B cell (primary cell): ENCODE measurements at regions of chr5 and their contacts with region 1.

Region 1: GRCh38 chr5:74648835-74649293 is 8.3 kb upstream of the ENC1 start:
- DNase-seq: peak; percentile 72
- ATAC-seq: peak; percentile 63
- H3K4me3 ChIP-seq: no peak overlapping the region
- H3K4me3 Mint-ChIP-seq: no peak overlapping the region
- H3K27ac ChIP-seq: no peak overlapping the region
- H3K27ac Mint-ChIP-seq: no peak overlapping the region
- H3K4me1 ChIP-seq: no peaks in the 10 kb centered on the region
- H3K4me1 Mint-ChIP-seq: peaks cover 2% of the 10 kb centered on the region
- H3K27me3 ChIP-seq: peaks cover 0 to 10% (median 7%) of the 10 kb centered on the region in 4 experiments
- H3K27me3 Mint-ChIP-seq: peaks cover 26% of the 10 kb centered on the region
- CTCF ChIP-seq: peak; percentile 92

Region 2: DNA sequence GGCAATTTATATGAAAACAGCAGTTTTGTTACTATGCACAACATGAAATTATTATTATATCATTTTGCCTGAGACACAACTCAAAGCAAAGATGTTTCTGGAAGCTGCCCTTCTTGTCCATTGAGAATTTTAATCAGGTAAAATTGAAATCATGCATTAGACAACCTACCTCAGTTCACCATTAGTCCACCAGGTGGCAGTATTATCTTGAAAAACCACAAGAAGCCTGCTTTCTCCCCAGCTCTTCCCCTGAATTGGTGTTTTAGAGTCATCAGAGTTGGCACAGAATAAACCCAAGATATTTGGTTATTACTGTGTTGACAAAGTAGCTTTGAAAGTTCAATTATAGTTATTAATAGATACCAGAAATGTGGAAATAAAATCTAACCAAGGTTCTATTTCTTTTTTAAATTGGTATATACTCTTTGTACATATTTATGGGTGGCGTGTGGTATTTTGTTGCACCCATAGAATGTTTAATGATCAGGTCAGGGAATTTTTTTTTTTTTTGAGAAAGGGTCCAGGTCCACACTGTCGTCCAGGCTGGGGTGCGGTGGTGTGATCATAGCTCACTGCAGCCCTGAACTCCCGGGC is 1057.7 kb before region 1 on chr5:
- CTCF ChIA-PET with region 1: interaction called, 15 read pairs
- POLR2A ChIA-PET with region 1: no interaction called
- intact Hi-C with region 1: loop called (anchors 1 kb)
- DNase-seq: peak; percentile 74
- ATAC-seq: peak; percentile 54
- H3K4me3 ChIP-seq: no peak overlapping the region
- H3K4me3 Mint-ChIP-seq: no peak overlapping the region
- H3K27ac ChIP-seq: no peak overlapping the region
- H3K27ac Mint-ChIP-seq: no peak overlapping the region
- H3K4me1 ChIP-seq: no peaks in the 10 kb centered on the region
- H3K4me1 Mint-ChIP-seq: no peaks in the 10 kb centered on the region
- H3K27me3 ChIP-seq: no peaks in the 10 kb centered on the region
- H3K27me3 Mint-ChIP-seq: no peaks in the 10 kb centered on the region
- CTCF ChIP-seq: peak; percentile 88

Region 3: DNA sequence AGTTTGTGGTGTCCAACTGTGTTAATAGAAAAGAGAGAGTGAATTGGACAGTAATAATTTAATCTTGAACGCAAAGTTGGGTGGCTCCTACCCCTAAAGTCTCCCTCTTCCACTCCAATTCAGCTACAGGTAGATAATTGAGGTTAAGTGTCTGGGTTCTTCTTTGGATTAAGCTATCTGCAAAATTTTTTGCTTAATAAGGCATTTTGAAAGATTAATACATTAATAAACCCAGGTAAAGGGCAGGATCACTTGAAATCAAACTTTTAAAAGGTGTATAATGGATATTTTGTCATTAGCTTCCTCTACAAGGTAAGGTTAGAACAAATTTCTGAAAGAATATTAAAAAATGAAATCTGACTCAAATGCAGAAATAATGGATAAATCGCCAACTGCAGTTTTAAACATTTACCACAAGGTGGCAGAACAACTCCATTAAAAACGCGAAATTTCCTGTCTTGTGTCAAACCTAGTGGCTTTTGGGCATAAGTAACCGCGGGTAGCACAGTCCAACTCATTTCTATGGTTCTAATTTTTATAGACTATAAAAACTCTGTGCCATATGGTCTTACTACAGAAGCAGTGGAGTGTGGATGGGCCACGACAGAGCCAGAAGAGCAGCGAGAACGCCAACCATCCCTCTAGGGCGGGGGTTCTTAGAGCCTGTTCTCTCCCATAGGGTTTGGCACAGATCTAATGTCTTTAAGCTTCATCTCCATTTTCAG is 746.4 kb before region 1 on chr5:
- CTCF ChIA-PET with region 1: interaction called, 86 read pairs
- POLR2A ChIA-PET with region 1: no interaction called
- intact Hi-C with region 1: loop called (anchors 1 kb)
- DNase-seq: peak; percentile 64
- ATAC-seq: no peak
- H3K4me3 ChIP-seq: no peak overlapping the region
- H3K4me3 Mint-ChIP-seq: no peak overlapping the region
- H3K27ac ChIP-seq: no peak overlapping the region
- H3K27ac Mint-ChIP-seq: no peak overlapping the region
- H3K4me1 ChIP-seq: no peaks in the 10 kb centered on the region
- H3K4me1 Mint-ChIP-seq: no peaks in the 10 kb centered on the region
- H3K27me3 ChIP-seq: peaks cover 0 to 5% (median 0%) of the 10 kb centered on the region in 4 experiments
- H3K27me3 Mint-ChIP-seq: peaks cover 42% of the 10 kb centered on the region
- CTCF ChIP-seq: peak; percentile 94

Region 4: DNA sequence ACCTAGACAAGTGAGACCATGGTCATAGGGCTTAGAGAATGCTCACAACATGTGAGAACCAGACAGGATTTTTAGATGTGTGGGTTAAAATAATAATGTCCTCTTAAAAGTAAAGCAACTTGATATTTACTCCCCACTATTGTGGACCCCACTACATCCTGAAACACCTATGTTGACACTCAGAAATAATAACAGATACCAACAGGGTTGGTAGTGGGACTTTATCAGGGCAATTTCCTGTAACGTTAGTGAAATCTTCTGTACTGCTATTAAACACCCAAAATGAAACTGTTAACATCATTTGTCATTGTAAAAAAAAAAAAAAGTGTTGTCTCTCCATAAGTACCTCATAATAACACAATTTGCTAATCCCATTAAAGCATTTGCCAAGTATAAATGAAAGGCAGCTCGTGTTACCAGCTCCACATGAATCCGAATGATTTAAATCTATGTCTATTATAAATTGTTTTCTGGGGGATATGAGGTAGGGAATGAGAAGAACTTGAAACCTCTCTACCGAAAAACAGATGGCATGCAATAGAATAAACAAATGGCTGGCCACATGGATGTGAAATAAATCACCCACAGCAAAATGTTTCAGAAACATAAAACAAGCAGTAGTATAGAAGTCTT is 737.0 kb before region 1 on chr5:
- CTCF ChIA-PET with region 1: interaction called, 10 read pairs
- POLR2A ChIA-PET with region 1: no interaction called
- intact Hi-C with region 1: no loop called
- DNase-seq: no peak
- ATAC-seq: no peak
- H3K4me3 ChIP-seq: no peak overlapping the region
- H3K4me3 Mint-ChIP-seq: no peak overlapping the region
- H3K27ac ChIP-seq: no peak overlapping the region
- H3K27ac Mint-ChIP-seq: no peak overlapping the region
- H3K4me1 ChIP-seq: no peaks in the 10 kb centered on the region
- H3K4me1 Mint-ChIP-seq: no peaks in the 10 kb centered on the region
- H3K27me3 ChIP-seq: no peaks in the 10 kb centered on the region
- H3K27me3 Mint-ChIP-seq: peaks cover 7% of the 10 kb centered on the region
- CTCF ChIP-seq: no peak

Region 5: DNA sequence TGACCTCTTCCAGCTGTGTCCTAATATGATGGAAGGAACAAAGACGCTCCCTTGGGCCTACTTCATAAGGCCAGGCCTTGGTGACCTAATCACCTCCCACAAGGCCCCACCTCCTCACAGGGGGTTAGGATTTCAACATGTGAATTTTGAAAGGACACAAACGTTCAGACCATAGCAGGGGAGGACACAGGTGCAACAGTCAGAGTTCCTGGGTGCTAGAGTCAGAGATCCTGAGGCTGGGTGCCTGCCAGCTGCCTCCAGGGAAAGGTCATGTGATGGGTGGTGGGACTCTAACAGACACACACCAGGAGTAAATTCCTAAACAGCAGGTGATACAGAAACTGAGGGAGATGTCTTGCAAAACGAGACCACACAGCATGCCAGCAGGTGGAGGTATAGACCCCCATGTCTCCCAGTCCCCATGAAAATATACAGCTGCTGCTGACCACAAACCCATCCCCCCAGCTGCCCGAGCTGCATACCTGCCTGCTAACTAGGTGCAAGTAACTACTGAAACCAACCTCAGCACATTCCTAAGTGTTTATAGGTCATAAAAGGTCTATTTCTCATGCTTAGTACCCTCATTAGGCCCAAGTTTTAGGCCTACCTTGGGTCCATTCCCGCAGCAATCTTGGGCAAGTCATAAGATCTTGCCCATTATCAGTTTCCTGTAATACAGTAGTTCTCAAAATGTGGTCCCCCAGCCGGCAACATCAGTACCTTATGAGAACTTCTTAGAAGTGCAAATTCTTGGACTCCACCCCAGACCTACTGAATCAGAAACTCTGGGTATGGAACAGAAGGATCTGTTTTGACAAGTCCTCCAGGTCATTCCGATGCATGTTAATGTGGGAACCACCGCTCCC is 253.7 kb before region 1 on chr5:
- CTCF ChIA-PET with region 1: interaction called, 5 read pairs
- POLR2A ChIA-PET with region 1: no interaction called
- intact Hi-C with region 1: loop called (anchors 2 kb)
- DNase-seq: peak; percentile 7
- ATAC-seq: no peak
- H3K4me3 ChIP-seq: no peak overlapping the region
- H3K4me3 Mint-ChIP-seq: no peak overlapping the region
- H3K27ac ChIP-seq: no peak overlapping the region
- H3K27ac Mint-ChIP-seq: no peak overlapping the region
- H3K4me1 ChIP-seq: no peaks in the 10 kb centered on the region
- H3K4me1 Mint-ChIP-seq: no peaks in the 10 kb centered on the region
- H3K27me3 ChIP-seq: no peaks in the 10 kb centered on the region
- H3K27me3 Mint-ChIP-seq: peaks cover 3% of the 10 kb centered on the region
- CTCF ChIP-seq: no peak

Region 6: GRCh38 chr5:74822288-74822687 is 173.4 kb after region 1 on chr5:
- CTCF ChIA-PET with region 1: no interaction called
- POLR2A ChIA-PET with region 1: no interaction called
- intact Hi-C with region 1: no loop called
- DNase-seq: no peak
- ATAC-seq: no peak
- H3K4me3 ChIP-seq: no peak overlapping the region
- H3K4me3 Mint-ChIP-seq: no peak overlapping the region
- H3K27ac ChIP-seq: no peak overlapping the region
- H3K27ac Mint-ChIP-seq: no peak overlapping the region
- H3K4me1 ChIP-seq: no peaks in the 10 kb centered on the region
- H3K4me1 Mint-ChIP-seq: no peaks in the 10 kb centered on the region
- H3K27me3 ChIP-seq: no peaks in the 10 kb centered on the region
- H3K27me3 Mint-ChIP-seq: no peaks in the 10 kb centered on the region
- CTCF ChIP-seq: no peak

Region 7: DNA sequence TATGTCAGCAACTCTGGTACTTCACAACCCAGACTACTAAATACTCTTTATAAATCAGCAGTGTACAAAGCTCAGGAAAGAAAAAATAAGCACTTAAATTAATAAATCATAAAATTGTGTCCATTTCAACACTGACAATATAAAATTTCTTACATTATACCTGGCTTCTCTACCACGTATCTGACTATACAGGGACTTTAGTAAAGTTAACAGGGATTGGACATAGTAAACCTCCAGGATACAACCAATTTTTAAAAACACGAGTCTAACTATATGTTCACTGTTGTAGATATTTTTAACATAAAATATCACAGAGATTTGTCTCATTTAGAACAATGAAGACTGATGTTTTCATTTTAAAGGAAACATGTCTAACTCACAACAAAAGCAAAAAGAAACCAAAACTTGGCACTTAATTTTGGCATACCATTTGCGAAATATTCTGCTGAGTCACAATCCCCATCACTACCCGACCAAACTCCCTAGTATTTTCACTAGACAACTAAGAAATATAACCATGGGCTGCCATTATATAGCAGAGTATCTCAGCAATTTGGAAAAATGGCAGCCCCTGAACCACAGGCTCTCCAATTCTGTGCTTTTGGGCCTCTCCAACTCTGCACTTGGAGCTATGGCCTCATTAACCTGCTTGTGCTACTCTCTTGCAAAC is 203.0 kb after region 1 on chr5:
- CTCF ChIA-PET with region 1: no interaction called
- POLR2A ChIA-PET with region 1: no interaction called
- intact Hi-C with region 1: no loop called
- DNase-seq: no peak
- ATAC-seq: no peak
- H3K4me3 ChIP-seq: peak overlapping the region in 1 of 5 experiments; percentile 25
- H3K4me3 Mint-ChIP-seq: peak overlapping the region; percentile 75
- H3K27ac ChIP-seq: peak overlapping the region in 1 of 2 donors; percentile 4
- H3K27ac Mint-ChIP-seq: no peak overlapping the region
- H3K4me1 ChIP-seq: peaks cover 0 to 22% of the 10 kb centered on the region in 2 donors
- H3K4me1 Mint-ChIP-seq: peaks cover 33% of the 10 kb centered on the region
- H3K27me3 ChIP-seq: no peaks in the 10 kb centered on the region
- H3K27me3 Mint-ChIP-seq: no peaks in the 10 kb centered on the region
- CTCF ChIP-seq: no peak